ENCODE measurements at regions of chr1 and their contacts with region 1.

Region 1: DNA sequence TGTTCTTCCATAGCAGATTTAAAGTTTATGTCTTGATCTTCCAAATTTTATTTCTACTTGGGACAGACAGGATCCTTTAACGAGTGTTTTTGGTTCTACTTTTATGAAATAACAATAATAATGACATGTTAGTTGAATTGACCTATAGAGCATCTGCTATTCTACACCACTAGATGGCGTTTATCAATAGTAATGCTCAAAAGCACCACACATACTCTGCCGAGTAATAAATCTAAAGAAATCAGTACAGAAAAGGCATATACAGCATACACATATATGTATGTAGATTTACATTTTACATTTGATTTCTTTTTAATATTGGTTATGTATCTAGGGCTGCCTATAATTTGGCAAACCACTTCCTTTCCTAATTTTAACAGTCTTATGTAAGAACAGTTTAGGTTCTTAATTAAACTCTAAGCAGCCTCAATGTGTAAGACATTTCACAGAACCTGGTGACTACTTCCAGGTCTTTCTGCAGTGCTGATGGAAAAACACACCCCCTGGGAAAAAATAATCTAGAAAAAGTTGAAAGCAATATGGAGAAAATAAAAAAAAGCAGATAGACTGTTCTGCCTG is 5.9 kb upstream of the SIPA1L2 start:
- DNase-seq: no peak
- H3K4me3 Mint-ChIP-seq: no peak overlapping the region
- H3K27ac Mint-ChIP-seq: no peak overlapping the region
- H3K4me1 Mint-ChIP-seq: peaks cover 2% of the 10 kb centered on the region
- H3K27me3 Mint-ChIP-seq: peaks cover 23% of the 10 kb centered on the region

Region 2: GRCh38 chr1:233025157-233025915 is 389.5 kb after region 1 on chr1:
- intact Hi-C with region 1: loop called (anchors 5 kb)
- DNase-seq: no peak
- H3K4me3 Mint-ChIP-seq: no peak overlapping the region
- H3K27ac Mint-ChIP-seq: no peak overlapping the region
- H3K4me1 Mint-ChIP-seq: no peaks in the 10 kb centered on the region
- H3K27me3 Mint-ChIP-seq: no peaks in the 10 kb centered on the region

Region 3: GRCh38 chr1:233240829-233241682 is 605.2 kb after region 1 on chr1:
- intact Hi-C with region 1: loop called (anchors 1 kb)
- DNase-seq: no peak
- H3K4me3 Mint-ChIP-seq: no peak overlapping the region
- H3K27ac Mint-ChIP-seq: no peak overlapping the region
- H3K4me1 Mint-ChIP-seq: peaks cover 2% of the 10 kb centered on the region
- H3K27me3 Mint-ChIP-seq: no peaks in the 10 kb centered on the region

Measured in activated T-helper 2 cell treated with anti-CD3 and anti-CD28 coated beads, Interferon-gamma antibody, Interleukin-2, Interleukin-4, amounts not matched to agents 10 μg/mL and 5 μg/mL and 100 μg/mL, durations not matched to agents 14 hours and 24 hours and 36 hours (primary cell).